ENCODE measurements at regions of chr14 and their contacts with region 1.

Region 1: DNA sequence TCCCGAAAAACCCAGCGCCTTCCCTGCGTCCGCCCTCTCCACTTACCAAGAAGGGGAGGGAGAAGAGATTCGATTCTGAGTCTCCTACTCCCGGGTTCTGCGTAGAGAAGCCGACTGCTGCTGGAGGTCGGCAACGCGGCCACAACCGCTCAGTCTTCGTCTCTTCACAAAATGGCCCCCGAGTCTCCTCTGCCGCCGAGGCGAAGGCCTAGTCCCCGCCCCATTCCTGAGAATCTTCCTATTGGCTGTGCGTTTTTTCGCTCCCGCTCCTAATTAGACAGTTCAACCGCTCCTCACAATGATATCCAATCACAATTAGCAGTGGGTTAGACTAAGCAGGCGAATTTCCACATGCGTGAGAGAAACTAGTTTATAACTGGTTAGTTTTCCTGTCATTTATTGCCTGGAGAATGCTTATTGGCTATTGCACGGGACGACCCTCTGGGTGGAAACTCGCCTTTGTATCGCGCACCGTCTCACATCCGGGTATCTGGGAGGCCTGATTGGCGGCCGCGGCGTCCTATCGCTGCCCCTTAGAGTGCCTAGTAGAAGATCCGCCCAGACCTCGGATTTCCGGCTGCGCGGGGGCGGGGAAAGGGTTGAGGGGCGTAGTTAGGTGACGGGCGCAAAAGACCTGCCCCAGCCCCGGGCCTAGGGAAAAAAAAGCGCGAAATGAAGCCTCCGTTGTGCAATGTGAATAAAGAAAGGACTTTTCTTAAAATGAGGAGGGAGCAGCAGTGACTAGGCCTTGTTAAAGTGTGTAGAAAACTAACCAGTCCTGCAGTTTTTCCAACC is at the start of gene HNRNPC:
- DNase-seq: peak; percentile 100
- ATAC-seq: peak; percentile 97 to 99 (median 98)
- H3K4me3 ChIP-seq: peak within 1 kb of the TSS; percentile 58 to 99 (median 82)
- H3K27ac ChIP-seq: peak within 1 kb of the TSS; percentile 81 to 98 (median 94)
- H3K4me1 ChIP-seq: peaks cover 4 to 51% (median 36%) of the 10 kb centered on the region in 12 donors
- H3K27me3 ChIP-seq: no peaks in the 10 kb centered on the region
- CTCF ChIP-seq: no peak
- POLR2A ChIP-seq: peak in 1 of 2 donors; percentile 88
- total RNA-seq, gene HNRNPC: 201 to 289 (median 249) TPM

Region 2: DNA sequence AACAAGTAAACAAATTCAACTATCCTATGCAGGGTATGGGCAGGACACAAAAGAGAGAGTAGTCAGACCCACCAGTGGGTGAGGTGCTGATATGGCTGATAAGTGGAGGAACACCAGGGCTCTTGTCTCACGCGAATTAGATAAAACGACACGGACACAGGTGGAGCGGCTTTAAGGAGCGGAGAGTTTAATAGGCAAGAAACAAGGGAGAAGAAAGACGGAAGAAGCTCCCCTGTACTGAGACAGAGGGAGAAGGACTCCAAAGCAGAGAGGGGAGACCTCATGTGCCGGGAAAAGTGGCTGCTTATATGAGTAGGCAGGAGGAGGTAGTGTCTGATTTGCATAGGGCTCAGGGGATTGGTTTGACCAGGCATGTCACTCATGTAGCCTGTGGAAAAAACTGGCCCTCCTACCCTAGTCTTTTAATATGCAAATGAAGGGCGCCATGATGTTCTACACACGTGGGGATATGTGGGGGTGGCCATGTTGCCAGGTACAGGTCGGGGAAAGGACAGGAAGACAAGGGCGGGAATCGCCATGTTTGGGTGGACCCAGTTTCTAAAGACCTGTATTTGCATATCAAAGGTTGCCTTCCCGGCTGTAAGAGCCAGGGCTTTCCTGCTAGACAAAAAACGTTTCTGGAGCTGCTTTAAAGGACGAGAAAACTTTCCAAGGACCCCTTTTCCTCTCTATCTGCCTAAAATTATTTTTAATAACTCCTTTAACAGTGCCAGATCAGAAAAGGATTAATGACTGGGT is 39.2 kb after region 1 on chr14:
- intact Hi-C with region 1: loop called in 1 of 10 experiments (anchors 1 kb)
- DNase-seq: peak; percentile 59 to 81 (median 70)
- ATAC-seq: peak; percentile 89 to 93 (median 93)
- H3K4me3 ChIP-seq: peak overlapping the region in 10 of 12 donors; percentile 2 to 57 (median 45)
- H3K27ac ChIP-seq: peak overlapping the region; percentile 11 to 81 (median 65)
- H3K4me1 ChIP-seq: peaks cover 0 to 11% (median 0%) of the 10 kb centered on the region in 12 donors
- H3K27me3 ChIP-seq: no peaks in the 10 kb centered on the region
- CTCF ChIP-seq: no peak
- POLR2A ChIP-seq: peak in 1 of 2 donors; percentile 56

Region 3: DNA sequence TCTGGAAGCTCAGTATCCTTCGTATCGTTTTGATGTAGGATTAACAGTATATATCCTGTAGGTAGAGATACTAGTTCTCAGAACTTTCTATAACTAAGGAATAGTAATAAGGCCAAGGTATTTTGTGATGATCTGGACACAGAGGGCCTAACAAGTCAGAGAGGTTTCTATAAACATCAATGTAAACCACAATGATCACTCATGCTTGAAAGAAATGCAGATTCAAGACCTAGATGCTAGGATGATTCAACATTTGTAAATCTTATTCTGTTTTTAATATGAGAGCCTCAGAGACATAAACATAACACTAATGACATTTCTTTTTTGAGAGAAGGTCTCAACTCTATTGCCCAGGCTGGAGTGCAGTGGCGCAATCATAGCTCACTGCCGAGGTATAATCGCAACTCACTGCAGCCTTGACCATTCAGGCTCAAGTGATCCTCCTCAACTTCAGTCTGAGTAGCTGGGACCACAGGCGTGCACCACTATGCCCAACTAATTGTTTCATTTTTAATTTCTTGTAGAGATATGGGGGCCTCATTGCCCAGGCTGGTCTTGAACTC is 98.2 kb after region 1 on chr14:
- intact Hi-C with region 1: loop called in 1 of 10 experiments (anchors 10 kb)
- DNase-seq: no peak
- ATAC-seq: no peak
- H3K4me3 ChIP-seq: no peak overlapping the region
- H3K27ac ChIP-seq: no peak overlapping the region
- H3K4me1 ChIP-seq: peaks cover 0 to 7% (median 0%) of the 10 kb centered on the region in 12 donors
- H3K27me3 ChIP-seq: no peaks in the 10 kb centered on the region
- CTCF ChIP-seq: no peak
- POLR2A ChIP-seq: no peak

Region 4: DNA sequence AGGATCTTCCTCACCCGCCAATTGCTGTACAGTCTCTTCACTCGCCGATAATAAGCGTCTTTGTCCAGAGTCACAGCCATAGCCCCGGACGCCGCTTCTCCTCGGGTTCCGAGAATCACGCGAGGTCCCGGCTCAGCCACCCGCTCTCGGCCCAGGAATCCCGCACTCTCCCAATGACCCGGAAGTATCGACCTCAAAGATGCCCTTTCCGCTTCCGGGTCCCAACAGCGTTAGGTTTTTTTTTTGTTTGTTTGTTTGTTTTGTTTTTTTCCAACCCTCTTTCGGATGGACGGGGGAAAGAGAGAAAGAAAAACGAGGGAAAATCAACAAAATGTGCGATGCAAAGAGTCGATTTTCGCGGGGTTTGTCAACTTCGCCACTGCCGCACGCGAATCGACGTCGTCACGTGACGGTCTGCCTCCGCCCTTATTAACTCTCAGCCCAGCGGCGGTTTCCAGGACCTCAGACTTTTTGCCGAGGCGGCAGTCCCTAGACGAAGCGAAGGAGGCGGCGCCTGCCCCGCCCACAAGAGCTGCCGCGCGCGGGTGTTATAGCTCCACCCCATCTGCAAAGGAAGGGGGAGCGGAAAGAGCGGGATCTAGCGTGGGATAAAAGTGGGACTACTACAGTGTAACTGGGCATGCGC is 114.5 kb after region 1 on chr14 and contains the start of gene SUPT16H:
- intact Hi-C with region 1: loop called in 7 of 10 experiments (anchors 1 to 10 kb)
- DNase-seq: peak; percentile 95 to 98 (median 97)
- ATAC-seq: peak; percentile 98 to 99 (median 98)
- H3K4me3 ChIP-seq: peak within 1 kb of the TSS; percentile 63 to 97 (median 71)
- H3K27ac ChIP-seq: peak within 1 kb of the TSS; percentile 29 to 97 (median 90)
- H3K4me1 ChIP-seq: peaks cover 0 to 48% (median 29%) of the 10 kb centered on the region in 12 donors
- H3K27me3 ChIP-seq: no peaks in the 10 kb centered on the region
- CTCF ChIP-seq: peak in 1 of 12 donors; percentile 12
- POLR2A ChIP-seq: no peak
- total RNA-seq, gene SUPT16H: 25.1 to 38.1 (median 29.6) TPM

Region 5: GRCh38 chr14:21437063-21437901 is 167.8 kb after region 1 on chr14:
- intact Hi-C with region 1: loop called in 1 of 10 experiments (anchors 10 kb)
- DNase-seq: peak; percentile 99 to 100 (median 99)
- ATAC-seq: peak; percentile 99 to 100 (median 100)
- H3K4me3 ChIP-seq: peak overlapping the region; percentile 47 to 96 (median 86)
- H3K27ac ChIP-seq: peak overlapping the region; percentile 83 to 95 (median 90)
- H3K4me1 ChIP-seq: peaks cover 0 to 39% (median 23%) of the 10 kb centered on the region in 12 donors
- H3K27me3 ChIP-seq: no peaks in the 10 kb centered on the region
- CTCF ChIP-seq: no peak
- POLR2A ChIP-seq: peak in 1 of 2 donors; percentile 77

Region 6: GRCh38 chr14:21510735-21511657 is 241.5 kb after region 1 on chr14 and contains the start of gene METTL3:
- intact Hi-C with region 1: loop called in 1 of 10 experiments (anchors 5 kb)
- DNase-seq: peak; percentile 96 to 99 (median 98)
- ATAC-seq: peak; percentile 99 to 100 (median 100)
- H3K4me3 ChIP-seq: peak within 1 kb of the TSS; percentile 64 to 94 (median 82)
- H3K27ac ChIP-seq: peak within 1 kb of the TSS; percentile 55 to 92 (median 82)
- H3K4me1 ChIP-seq: peaks cover 0 to 28% (median 13%) of the 10 kb centered on the region in 12 donors
- H3K27me3 ChIP-seq: no peaks in the 10 kb centered on the region
- CTCF ChIP-seq: peak in 1 of 12 donors; percentile 7
- POLR2A ChIP-seq: no peak
- total RNA-seq, gene METTL3: 21.0 to 37.0 (median 25.2) TPM

Measured in heart left ventricle (tissue), 16 donors.